ENCODE measurements at regions of chr2 and their contacts with region 1.

Region 1: GRCh38 chr2:42360890-42361727 is at the start of gene COX7A2L:
- DNase-seq: peak; percentile 96
- ATAC-seq: peak; percentile 95 to 97
- H3K4me3 ChIP-seq: peak within 1 kb of the TSS; percentile 86 to 99 (median 97)
- H3K27ac ChIP-seq: peak within 1 kb of the TSS; percentile 97 to 99 (median 98)
- H3K4me1 ChIP-seq: peaks cover 31 to 36% of the 10 kb centered on the region in 2 donors
- H3K27me3 ChIP-seq: no peaks in the 10 kb centered on the region
- CTCF ChIP-seq: peak in 3 of 5 experiments; percentile 3 to 58 (median 43)
- POLR2A ChIP-seq: peak; percentile 85 to 91
- total RNA-seq, gene COX7A2L: 69.8 to 94.7 (median 89.1) TPM

Region 2: DNA sequence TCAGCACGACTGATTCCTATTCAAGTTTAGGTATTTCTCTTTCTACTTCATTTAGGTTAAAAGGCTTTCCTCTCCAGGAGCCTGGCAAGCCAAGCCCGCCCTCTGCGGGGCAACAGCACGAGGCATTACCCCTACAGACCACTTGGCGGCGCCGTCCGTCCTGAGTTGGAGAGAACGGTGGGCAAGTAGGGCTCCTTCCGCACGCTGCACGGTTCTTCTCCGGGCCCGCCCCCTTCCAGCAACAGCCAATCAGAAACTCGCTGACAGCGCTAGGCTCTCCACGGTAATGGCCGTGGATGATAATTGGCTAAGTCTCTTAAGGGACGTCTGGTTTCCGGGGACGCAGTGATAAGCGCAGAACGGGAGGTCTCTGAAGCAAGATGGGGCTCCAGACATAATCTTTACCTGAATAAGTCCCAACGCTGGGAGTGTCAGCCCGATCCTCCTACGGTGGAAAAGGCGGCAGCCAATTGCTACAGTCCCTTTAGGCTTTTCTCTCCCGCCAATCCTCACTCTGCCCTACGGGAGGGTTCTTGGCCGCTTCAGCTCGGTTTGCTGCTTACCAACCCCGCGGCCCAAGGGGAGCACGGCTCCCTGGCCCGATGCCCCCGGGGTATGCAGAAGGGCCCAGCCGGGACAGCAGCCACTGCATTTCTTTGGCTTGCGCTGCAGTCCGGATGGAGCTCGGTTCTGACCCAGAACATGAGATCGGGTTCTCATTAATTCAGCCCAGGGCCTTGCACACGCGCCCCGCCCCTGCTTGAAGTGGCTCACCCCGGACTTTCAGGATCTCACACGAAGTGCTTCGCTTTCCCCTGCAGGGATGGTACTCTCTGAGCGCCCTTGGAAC is 520.2 kb before region 1 on chr2:
- in situ Hi-C with region 1: loop called in 1 of 4 experiments (anchors 10 kb)
- intact Hi-C with region 1: loop called (anchors 2 kb)
- DNase-seq: peak; percentile 94 to 97
- ATAC-seq: peak; percentile 99 to 100
- H3K4me3 ChIP-seq: peak overlapping the region; percentile 63 to 87 (median 79)
- H3K27ac ChIP-seq: peak overlapping the region; percentile 84 to 93 (median 92)
- H3K4me1 ChIP-seq: peaks cover 9 to 16% of the 10 kb centered on the region in 2 donors
- H3K27me3 ChIP-seq: no peaks in the 10 kb centered on the region
- CTCF ChIP-seq: peak; percentile 98 to 99 (median 98)
- POLR2A ChIP-seq: peak; percentile 40 to 91

Region 3: DNA sequence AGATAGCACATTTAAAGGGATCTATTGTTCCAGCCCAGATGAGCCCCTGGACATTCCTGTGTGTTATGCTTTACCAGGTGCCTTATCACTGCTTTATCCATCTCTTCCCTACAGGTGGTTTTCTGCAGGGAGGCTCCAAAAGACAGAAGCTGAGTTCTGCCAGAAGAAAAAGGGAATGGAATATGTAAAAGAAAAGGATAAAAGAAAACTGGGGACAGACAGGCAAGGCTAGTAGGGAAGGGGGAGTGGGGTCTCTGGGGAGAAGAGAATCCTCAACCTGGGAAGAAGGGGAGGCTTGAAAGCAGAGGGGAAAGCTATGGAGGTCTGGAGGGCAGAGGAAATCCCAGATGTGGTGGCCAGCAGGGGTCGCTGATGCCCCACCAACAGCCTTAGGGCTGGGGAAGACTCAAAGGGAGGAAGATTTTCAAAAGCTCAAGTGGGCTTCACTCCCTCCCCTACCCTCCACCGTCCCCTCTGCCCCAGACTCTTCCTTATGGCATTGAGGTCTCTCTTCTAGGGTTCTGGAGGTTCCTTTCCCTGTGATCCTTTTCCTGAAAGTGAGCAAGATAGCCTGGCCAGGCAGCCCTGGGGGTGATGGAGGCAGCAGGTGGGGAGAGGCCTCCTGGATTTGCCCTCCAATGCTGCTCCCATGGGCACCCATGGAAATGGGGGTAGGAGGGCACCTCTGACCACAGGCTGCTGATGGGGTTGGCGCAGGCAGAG is 491.4 kb before region 1 on chr2:
- in situ Hi-C with region 1: loop called in 3 of 4 experiments (anchors 25 kb)
- intact Hi-C with region 1: no loop called
- DNase-seq: peak; percentile 42 to 74
- ATAC-seq: peak; percentile 81 to 90
- H3K4me3 ChIP-seq: no peak overlapping the region
- H3K27ac ChIP-seq: peak overlapping the region; percentile 69 to 76 (median 74)
- H3K4me1 ChIP-seq: peaks cover 11 to 16% of the 10 kb centered on the region in 2 donors
- H3K27me3 ChIP-seq: no peaks in the 10 kb centered on the region
- CTCF ChIP-seq: peak; percentile 81 to 95 (median 91)
- POLR2A ChIP-seq: no peak

Region 4: GRCh38 chr2:42047488-42048298 is 313.4 kb before region 1 on chr2 and contains the start of gene PKDCC:
- in situ Hi-C with region 1: no loop called
- intact Hi-C with region 1: loop called (anchors 5 kb)
- DNase-seq: peak; percentile 77 to 86
- ATAC-seq: peak; percentile 32 to 44
- H3K4me3 ChIP-seq: peak within 1 kb of the TSS; percentile 84 to 90 (median 85)
- H3K27ac ChIP-seq: peak within 1 kb of the TSS; percentile 94 to 99 (median 98)
- H3K4me1 ChIP-seq: peaks cover 19 to 33% of the 10 kb centered on the region in 2 donors
- H3K27me3 ChIP-seq: no peaks in the 10 kb centered on the region
- CTCF ChIP-seq: no peak
- POLR2A ChIP-seq: peak; percentile 87 to 89
- total RNA-seq, gene PKDCC: 152 to 246 (median 186) TPM

Region 5: GRCh38 chr2:42102024-42102590 is 259.0 kb before region 1 on chr2:
- in situ Hi-C with region 1: loop called (anchors 5 to 10 kb)
- intact Hi-C with region 1: no loop called
- DNase-seq: peak in 1 of 2 donors; percentile 36
- ATAC-seq: peak; percentile 35 to 48
- H3K4me3 ChIP-seq: peak overlapping the region; percentile 51 to 65 (median 56)
- H3K27ac ChIP-seq: peak overlapping the region; percentile 55 to 80 (median 72)
- H3K4me1 ChIP-seq: peaks cover 2 to 3% of the 10 kb centered on the region in 2 donors
- H3K27me3 ChIP-seq: no peaks in the 10 kb centered on the region
- CTCF ChIP-seq: no peak
- POLR2A ChIP-seq: no peak

Region 6: GRCh38 chr2:42810121-42810970 is 449.2 kb after region 1 on chr2:
- in situ Hi-C with region 1: loop called in 1 of 4 experiments (anchors 25 kb)
- intact Hi-C with region 1: no loop called
- DNase-seq: peak; percentile 89 to 96
- ATAC-seq: peak; percentile 80 to 90
- H3K4me3 ChIP-seq: peak overlapping the region; percentile 68 to 97 (median 84)
- H3K27ac ChIP-seq: peak overlapping the region; percentile 96 to 100 (median 98)
- H3K4me1 ChIP-seq: peaks cover 8 to 11% of the 10 kb centered on the region in 2 donors
- H3K27me3 ChIP-seq: no peaks in the 10 kb centered on the region
- CTCF ChIP-seq: peak in 2 of 5 experiments; percentile 10 to 14
- POLR2A ChIP-seq: peak; percentile 82 to 88

Region 7: DNA sequence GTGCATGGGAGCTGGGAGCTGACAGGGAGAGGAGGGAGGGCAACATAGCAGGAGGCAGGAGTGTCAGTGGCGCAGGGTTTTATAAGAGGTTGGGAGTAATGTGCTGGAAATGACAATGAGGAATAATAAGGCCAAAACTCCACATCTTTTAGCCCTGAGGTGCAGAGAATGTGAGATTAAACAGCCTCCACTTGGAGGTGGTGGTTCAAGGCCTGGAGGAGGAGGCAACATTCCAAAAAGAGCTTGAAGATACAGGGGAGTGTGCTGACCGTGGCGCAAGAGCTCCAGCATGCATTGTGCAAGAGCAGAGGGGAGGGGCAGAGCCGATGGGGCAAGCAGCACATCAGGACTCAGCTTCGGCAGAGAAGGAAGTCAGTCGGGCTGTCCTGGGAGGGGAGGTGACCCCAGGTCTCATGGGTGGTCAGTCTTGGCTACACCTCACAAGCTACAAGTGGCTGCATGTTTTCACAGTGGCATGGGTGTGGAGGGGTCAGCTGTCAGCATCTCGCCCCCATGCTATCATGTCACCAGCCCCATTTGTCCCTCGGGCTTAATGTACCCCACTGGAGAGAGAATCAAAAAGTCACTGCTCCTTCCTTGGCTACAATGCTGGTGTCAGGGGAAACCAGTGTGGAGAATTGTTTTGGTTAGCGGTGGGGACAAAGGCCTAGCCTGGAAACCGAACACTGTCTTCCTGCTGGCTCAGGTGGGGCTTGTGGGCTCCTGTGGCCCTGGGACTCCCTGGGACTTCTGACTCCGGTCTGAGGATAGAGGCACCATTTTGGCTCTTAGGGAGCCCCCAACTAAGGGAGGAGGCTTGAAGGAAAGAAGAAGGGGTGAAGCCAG is 657.3 kb after region 1 on chr2:
- in situ Hi-C with region 1: no loop called
- intact Hi-C with region 1: no loop called
- DNase-seq: peak; percentile 70 to 89
- ATAC-seq: peak; percentile 80 to 92
- H3K4me3 ChIP-seq: no peak overlapping the region
- H3K27ac ChIP-seq: peak overlapping the region; percentile 51 to 67 (median 60)
- H3K4me1 ChIP-seq: peaks cover 0 to 6% of the 10 kb centered on the region in 2 donors
- H3K27me3 ChIP-seq: no peaks in the 10 kb centered on the region
- CTCF ChIP-seq: no peak
- POLR2A ChIP-seq: no peak